Thyroid gland (tissue), 4 donors: ENCODE measurements at regions of chr9 and their contacts with region 1.

Region 1: GRCh38 chr9:26936300-26936948 is 10.6 kb downstream of the PLAA start:
- DNase-seq: no peak
- H3K4me3 ChIP-seq: no peak overlapping the region
- H3K27ac ChIP-seq: no peak overlapping the region
- H3K4me1 ChIP-seq: no peaks in the 10 kb centered on the region
- H3K27me3 ChIP-seq: no peaks in the 10 kb centered on the region
- CTCF ChIP-seq: no peak
- POLR2A ChIP-seq: no peak

Region 2: DNA sequence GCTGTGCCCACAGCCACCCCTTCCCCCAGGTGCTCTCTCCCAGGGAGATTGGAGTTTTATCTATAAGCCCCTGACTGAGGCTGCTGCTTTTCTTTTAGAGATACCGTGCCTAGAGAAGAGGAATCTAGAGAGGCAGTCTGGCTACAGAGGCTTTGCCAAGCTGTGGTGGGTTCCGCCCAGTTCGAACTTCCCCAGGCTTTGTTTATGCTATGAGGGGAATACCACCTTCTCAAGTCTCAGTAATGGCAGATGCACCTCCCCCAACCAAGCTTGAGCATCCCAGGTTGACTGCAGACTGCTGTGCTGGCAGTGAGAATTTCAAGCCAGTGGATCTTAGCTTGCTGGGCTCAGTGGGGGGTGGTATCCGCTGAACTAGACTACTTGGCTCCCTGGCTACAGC is 201.3 kb before region 1 on chr9:
- intact Hi-C with region 1: loop called (anchors 10 kb)
- DNase-seq: no peak
- H3K4me3 ChIP-seq: no peak overlapping the region
- H3K27ac ChIP-seq: no peak overlapping the region
- H3K4me1 ChIP-seq: no peaks in the 10 kb centered on the region
- H3K27me3 ChIP-seq: no peaks in the 10 kb centered on the region
- CTCF ChIP-seq: no peak
- POLR2A ChIP-seq: no peak